ENCODE measurements at regions of chr19 and their contacts with region 1.

Region 1: DNA sequence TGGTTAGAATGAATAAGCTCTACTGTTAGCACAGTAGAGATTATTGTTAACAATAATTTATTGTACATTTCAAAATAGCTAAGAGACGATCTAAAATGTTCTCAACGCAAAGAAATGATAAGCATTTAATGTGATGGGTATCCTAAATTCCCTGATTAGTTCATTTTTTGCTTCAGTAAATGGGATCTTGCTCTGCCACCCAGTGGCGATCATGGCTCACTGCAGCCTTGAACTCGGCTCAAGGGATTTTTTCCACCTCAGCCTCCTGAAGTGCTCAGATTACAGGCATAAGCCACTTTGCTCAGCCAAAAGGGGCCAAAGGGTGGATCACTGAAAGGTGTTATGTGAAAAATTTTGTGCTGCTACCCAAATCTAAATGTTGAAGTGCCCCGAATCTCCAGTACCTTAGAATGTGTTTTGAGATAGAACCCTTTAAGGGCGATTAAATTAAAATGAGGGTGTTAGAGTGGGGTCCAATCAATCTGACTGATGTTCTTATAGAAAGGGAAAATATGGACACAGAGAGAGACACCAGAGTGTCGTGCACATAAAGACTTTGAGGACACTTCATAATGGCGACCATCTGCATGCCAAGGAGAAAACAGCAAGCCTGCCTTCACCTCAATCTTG is 31.5 kb upstream of the ZNF766 start:
- DNase-seq: peak; percentile 69
- ATAC-seq: peak; percentile 68

Region 2: DNA sequence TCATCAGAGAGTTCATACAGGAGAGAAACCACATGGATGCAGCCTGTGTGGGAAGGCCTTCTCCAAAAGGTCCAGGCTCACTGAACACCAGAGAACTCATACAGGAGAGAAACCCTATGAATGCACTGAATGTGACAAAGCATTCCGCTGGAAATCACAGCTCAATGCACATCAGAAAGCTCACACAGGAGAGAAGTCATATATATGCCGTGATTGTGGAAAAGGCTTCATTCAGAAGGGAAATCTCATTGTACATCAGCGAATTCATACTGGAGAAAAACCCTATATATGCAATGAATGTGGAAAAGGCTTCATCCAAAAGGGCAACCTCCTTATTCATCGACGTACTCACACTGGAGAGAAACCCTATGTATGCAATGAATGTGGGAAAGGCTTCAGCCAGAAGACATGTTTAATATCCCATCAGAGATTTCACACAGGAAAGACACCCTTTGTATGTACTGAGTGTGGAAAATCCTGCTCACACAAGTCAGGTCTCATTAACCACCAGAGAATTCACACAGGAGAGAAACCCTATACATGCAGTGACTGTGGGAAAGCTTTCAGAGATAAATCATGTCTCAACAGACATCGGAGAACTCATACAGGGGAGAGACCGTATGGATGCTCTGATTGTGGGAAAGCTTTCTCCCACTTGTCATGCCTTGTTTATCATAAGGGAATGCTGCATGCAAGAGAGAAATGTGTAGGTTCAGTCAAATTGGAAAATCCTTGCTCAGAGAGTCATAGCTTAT is 292.9 kb before region 1 on chr19:
- intact Hi-C with region 1: no loop called
- DNase-seq: no peak
- ATAC-seq: no peak

Region 3: DNA sequence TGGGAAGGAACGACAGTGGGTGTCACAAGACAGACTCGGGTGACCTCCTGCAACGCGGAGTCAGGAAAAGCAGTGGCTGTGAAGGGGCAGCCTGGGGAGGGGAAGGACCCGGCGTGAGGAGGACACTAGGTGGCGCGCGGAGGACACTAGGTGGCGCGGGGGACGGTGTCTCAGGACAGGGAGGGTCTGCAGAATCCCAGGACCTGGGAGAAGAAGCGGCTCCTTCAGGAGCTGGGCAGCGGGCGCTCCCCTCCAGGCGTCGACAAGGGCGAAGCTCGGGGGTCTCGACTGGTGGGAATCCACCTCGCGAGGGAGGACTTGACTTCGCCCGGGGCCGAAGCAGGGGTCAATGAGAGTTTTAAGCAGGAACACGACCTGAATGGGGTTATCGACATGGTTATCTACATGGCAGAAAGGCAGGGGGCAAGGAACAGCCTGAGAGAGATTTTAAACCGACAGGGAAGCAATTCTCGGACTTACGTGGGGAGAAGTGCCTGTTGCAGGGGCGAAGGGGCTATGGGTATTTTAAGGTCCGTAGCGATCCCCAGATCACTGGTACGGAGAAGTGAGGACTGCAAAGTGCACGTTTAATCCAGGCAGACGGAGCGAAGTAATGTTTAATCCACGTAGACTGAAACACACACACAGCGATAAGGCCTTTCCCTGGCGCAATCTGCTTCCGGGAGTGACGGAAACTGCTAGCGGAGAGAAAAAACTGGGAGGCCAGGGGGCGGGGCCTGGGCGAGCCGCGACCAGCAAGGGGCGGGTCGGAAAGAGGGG is 98.4 kb before region 1 on chr19 and contains the start of gene ZNF616:
- intact Hi-C with region 1: loop called (anchors 5 kb)
- DNase-seq: peak; percentile 99
- ATAC-seq: peak; percentile 96
- total RNA-seq, gene ZNF616: 12.8 TPM

Region 4: GRCh38 chr19:52214186-52214585 is 23.7 kb before region 1 on chr19:
- intact Hi-C with region 1: no loop called
- DNase-seq: no peak
- ATAC-seq: no peak

Measured in sciatic nerve (tissue), 2 donors.